HepG2 (cell line): ENCODE measurements at regions of chr4 and their contacts with region 1.

Region 1: DNA sequence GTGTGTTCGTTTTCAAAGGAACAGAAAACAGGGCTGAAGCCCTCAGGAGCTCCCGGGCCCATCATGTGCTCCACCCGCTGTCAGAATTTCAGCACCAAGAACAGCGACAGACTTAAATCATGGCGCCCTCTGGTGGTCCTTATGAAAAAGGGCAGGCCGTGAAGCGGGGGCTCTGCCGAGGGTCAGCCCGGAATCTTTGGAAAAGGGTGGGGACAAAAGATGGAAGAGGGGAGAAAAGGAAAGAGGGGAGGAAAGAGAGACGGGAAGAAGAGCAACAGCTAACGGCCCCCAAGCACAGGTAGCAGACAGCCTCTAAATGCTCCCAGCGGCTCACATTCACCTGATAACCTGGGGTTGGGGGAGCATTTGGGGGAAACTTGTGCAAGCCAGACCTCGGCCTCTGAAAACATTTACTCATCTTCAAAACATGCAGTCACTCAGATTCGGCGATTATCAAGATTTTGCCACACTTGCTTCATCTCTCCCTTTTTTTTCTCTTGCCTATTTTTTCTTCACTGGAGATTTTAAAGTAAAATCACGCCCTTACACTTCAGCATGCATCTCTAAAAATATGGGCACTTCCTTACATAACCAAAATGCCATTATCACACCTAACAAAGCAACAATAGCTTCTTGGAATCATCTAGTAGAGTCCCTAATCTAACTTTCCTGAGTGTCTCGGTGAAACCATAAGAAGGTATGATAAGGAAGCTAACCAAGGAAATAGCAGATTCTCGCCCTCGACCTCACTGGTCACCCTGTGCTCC is 28.1 kb upstream of the MAN2B2 start:
- DNase-seq: peak; percentile 59
- ATAC-seq: peak; percentile 77
- H3K4me3 ChIP-seq: no peak overlapping the region
- H3K27ac ChIP-seq: no peak overlapping the region
- H3K4me1 ChIP-seq: no peaks in the 10 kb centered on the region
- H3K27me3 ChIP-seq: peaks cover 0 to 19% of the 10 kb centered on the region in 2 experiments; a peak in 3 of 5 replicates
- CTCF ChIP-seq: peak; percentile 90
- EP300 ChIP-seq: no peak
- POLR2A ChIP-seq: no peak
- RAD21 ChIP-seq: peak; percentile 67

Region 2: DNA sequence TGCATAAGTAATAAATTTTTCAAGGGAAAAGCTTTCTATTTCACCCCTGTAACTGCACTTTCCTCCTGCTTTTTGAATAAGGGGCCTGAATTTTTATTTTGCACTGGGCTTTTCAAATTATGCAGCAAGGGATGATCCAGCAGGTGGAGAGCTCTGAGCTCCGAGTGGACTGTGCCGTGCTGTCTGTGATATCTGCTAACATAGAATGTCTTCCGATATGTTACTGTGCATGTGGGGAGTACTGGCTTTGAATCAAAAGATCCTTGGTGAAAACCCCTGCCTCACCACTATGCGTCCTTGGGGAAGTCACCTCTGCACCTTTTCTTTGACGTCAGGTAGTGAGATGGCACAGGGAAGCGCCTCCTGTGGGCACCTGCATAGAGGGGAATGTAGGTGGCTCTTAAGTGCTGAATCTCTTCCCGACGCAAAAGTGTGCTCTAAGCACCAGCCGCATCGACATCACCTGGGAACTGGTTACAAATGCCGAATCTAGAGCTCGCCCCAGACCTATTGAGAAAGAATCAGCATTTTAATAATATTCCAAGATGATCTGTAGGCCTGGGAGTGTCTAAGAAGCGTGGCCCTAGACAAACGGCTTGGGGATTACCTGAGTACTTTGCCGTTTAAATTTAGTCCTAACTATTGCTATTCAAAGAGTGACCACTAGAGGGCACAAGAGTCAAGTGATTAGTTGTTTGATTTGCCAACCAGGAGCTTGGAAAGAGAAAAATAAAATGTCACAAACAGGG is 296.5 kb before region 1 on chr4:
- CTCF ChIA-PET with region 1: no interaction called
- POLR2A ChIA-PET with region 1: no interaction called
- in situ Hi-C with region 1: loop called (anchors 25 kb)
- intact Hi-C with region 1: loop called (anchors 10 kb)
- DNase-seq: peak; percentile 67
- ATAC-seq: peak; percentile 54
- H3K4me3 ChIP-seq: no peak overlapping the region
- H3K27ac ChIP-seq: no peak overlapping the region
- H3K4me1 ChIP-seq: no peaks in the 10 kb centered on the region
- H3K27me3 ChIP-seq: peaks cover 2 to 40% of the 10 kb centered on the region in 2 experiments; a peak in 2 of 5 replicates
- CTCF ChIP-seq: peak; percentile 76
- EP300 ChIP-seq: no peak
- POLR2A ChIP-seq: no peak
- RAD21 ChIP-seq: peak; percentile 66

Region 3: GRCh38 chr4:6343950-6344408 is 202.9 kb before region 1 on chr4:
- CTCF ChIA-PET with region 1: interaction called, 5 read pairs
- POLR2A ChIA-PET with region 1: no interaction called
- in situ Hi-C with region 1: loop called (anchors 10 kb)
- intact Hi-C with region 1: loop called (anchors 5 kb)
- DNase-seq: peak; percentile 54
- ATAC-seq: peak; percentile 91
- H3K4me3 ChIP-seq: no peak overlapping the region
- H3K27ac ChIP-seq: no peak overlapping the region
- H3K4me1 ChIP-seq: peaks cover 7% of the 10 kb centered on the region; the same call in 1 of the 2 replicates
- H3K27me3 ChIP-seq: peaks cover 11 to 71% of the 10 kb centered on the region in 2 experiments; a peak in 4 of 5 replicates
- CTCF ChIP-seq: peak; percentile 82
- EP300 ChIP-seq: no peak
- POLR2A ChIP-seq: no peak
- RAD21 ChIP-seq: 0 out of 2 replicates have a peak, but pooled peaks have one; percentile 24

Region 4: GRCh38 chr4:6470502-6471306 is 76.2 kb before region 1 on chr4:
- CTCF ChIA-PET with region 1: no interaction called
- POLR2A ChIA-PET with region 1: no interaction called
- in situ Hi-C with region 1: no loop called
- intact Hi-C with region 1: loop called (anchors 5 kb)
- DNase-seq: no peak
- ATAC-seq: peak; percentile 61
- H3K4me3 ChIP-seq: peak overlapping the region; percentile 26 to 69 (median 43); a peak in 5 of 6 replicates
- H3K27ac ChIP-seq: no peak overlapping the region
- H3K4me1 ChIP-seq: no peaks in the 10 kb centered on the region
- H3K27me3 ChIP-seq: peaks cover 11 to 56% of the 10 kb centered on the region in 2 experiments; a peak in 4 of 5 replicates
- CTCF ChIP-seq: no peak
- EP300 ChIP-seq: no peak
- POLR2A ChIP-seq: no peak
- RAD21 ChIP-seq: no peak